ENCODE measurements at regions of chr3 and their contacts with region 1.

Region 1: GRCh38 chr3:123028233-123028828 is 768 bp upstream of the SEMA5B start:
- DNase-seq: peak; percentile 24
- H3K4me3 Mint-ChIP-seq: peak overlapping the region; percentile 53
- H3K27ac Mint-ChIP-seq: no peak overlapping the region
- H3K4me1 Mint-ChIP-seq: peaks cover 16% of the 10 kb centered on the region
- H3K27me3 Mint-ChIP-seq: peaks cover 5% of the 10 kb centered on the region

Region 2: GRCh38 chr3:122942937-122943827 is 85.1 kb before region 1 on chr3:
- CTCF ChIA-PET with region 1: interaction called, 51 read pairs
- DNase-seq: peak; percentile 49
- H3K4me3 Mint-ChIP-seq: no peak overlapping the region
- H3K27ac Mint-ChIP-seq: no peak overlapping the region
- H3K4me1 Mint-ChIP-seq: peaks cover 6% of the 10 kb centered on the region
- H3K27me3 Mint-ChIP-seq: peaks cover 52% of the 10 kb centered on the region